ENCODE measurements at regions of chr3 and their contacts with region 1.

Region 1: GRCh38 chr3:87272718-87273341 is 3.6 kb downstream of the POU1F1 start:
- DNase-seq: no peak
- H3K4me3 ChIP-seq: no peak overlapping the region
- H3K27ac ChIP-seq: no peak overlapping the region
- H3K4me1 ChIP-seq: peaks cover 15% of the 10 kb centered on the region
- H3K27me3 ChIP-seq: no peaks in the 10 kb centered on the region
- CTCF ChIP-seq: no peak
- POLR2A ChIP-seq: no peak

Region 2: DNA sequence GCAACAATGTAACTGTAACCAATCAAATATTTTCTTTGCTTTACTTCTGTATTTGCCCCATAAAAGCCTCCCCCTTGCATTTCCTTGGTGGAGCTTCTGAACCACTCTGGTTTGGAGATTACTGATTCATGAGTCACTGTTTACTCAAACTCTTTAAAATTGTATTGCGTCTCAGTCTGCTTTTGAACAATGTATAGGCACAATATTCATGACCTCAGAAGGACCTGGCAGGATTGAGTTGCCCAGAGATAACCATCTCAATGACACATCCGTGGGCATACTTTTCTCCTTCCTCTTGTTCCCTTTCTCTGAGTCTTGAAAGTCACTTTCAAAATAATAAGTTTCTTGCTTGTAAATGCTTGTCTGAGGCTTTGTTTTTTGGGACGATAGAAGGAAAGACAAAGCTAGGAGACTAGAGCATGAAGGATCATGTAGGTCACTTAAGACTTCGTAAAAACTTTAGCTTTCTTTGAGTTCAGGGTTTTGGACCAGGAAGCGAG is 60.6 kb after region 1 on chr3:
- CTCF ChIA-PET with region 1: interaction called, 4 read pairs
- POLR2A ChIA-PET with region 1: no interaction called
- dilution Hi-C with region 1: no loop called
- intact Hi-C with region 1: loop called (anchors 2 kb)
- DNase-seq: peak; percentile 91
- H3K4me3 ChIP-seq: peak overlapping the region in 1 of 3 experiments; percentile 25
- H3K27ac ChIP-seq: peak overlapping the region; percentile 97
- H3K4me1 ChIP-seq: peaks cover 40% of the 10 kb centered on the region
- H3K27me3 ChIP-seq: no peaks in the 10 kb centered on the region
- CTCF ChIP-seq: no peak
- POLR2A ChIP-seq: peak; percentile 28

Region 3: GRCh38 chr3:87397210-87397609 is 124.4 kb after region 1 on chr3:
- CTCF ChIA-PET with region 1: no interaction called
- POLR2A ChIA-PET with region 1: no interaction called
- dilution Hi-C with region 1: no loop called
- intact Hi-C with region 1: loop called (anchors 2 kb)
- DNase-seq: peak; percentile 75
- H3K4me3 ChIP-seq: no peak overlapping the region
- H3K27ac ChIP-seq: peak overlapping the region; percentile 90
- H3K4me1 ChIP-seq: peaks cover 23% of the 10 kb centered on the region
- H3K27me3 ChIP-seq: no peaks in the 10 kb centered on the region
- CTCF ChIP-seq: no peak
- POLR2A ChIP-seq: no peak